AG04450 (cell line): ENCODE measurements at regions of chr15 and their contacts with region 1.

Region 1: GRCh38 chr15:70875001-70875782 is 17.0 kb downstream of the THAP10 start:
- DNase-seq: no peak
- H3K4me3 ChIP-seq: no peak overlapping the region
- H3K27ac ChIP-seq: no peak overlapping the region
- H3K27me3 ChIP-seq: no peaks in the 10 kb centered on the region
- CTCF ChIP-seq: peak; percentile 77

Region 2: GRCh38 chr15:70679919-70680231 is 195.3 kb before region 1 on chr15:
- CTCF ChIA-PET with region 1: interaction called, 15 read pairs
- POLR2A ChIA-PET with region 1: no interaction called
- DNase-seq: no peak
- H3K4me3 ChIP-seq: no peak overlapping the region
- H3K27ac ChIP-seq: no peak overlapping the region
- H3K27me3 ChIP-seq: no peaks in the 10 kb centered on the region
- CTCF ChIP-seq: no peak

Region 3: GRCh38 chr15:70826634-70827033 is 48.6 kb before region 1 on chr15:
- CTCF ChIA-PET with region 1: interaction called, 67 read pairs
- POLR2A ChIA-PET with region 1: no interaction called
- DNase-seq: no peak
- H3K4me3 ChIP-seq: no peak overlapping the region
- H3K27ac ChIP-seq: no peak overlapping the region
- H3K27me3 ChIP-seq: no peaks in the 10 kb centered on the region
- CTCF ChIP-seq: no peak

Region 4: DNA sequence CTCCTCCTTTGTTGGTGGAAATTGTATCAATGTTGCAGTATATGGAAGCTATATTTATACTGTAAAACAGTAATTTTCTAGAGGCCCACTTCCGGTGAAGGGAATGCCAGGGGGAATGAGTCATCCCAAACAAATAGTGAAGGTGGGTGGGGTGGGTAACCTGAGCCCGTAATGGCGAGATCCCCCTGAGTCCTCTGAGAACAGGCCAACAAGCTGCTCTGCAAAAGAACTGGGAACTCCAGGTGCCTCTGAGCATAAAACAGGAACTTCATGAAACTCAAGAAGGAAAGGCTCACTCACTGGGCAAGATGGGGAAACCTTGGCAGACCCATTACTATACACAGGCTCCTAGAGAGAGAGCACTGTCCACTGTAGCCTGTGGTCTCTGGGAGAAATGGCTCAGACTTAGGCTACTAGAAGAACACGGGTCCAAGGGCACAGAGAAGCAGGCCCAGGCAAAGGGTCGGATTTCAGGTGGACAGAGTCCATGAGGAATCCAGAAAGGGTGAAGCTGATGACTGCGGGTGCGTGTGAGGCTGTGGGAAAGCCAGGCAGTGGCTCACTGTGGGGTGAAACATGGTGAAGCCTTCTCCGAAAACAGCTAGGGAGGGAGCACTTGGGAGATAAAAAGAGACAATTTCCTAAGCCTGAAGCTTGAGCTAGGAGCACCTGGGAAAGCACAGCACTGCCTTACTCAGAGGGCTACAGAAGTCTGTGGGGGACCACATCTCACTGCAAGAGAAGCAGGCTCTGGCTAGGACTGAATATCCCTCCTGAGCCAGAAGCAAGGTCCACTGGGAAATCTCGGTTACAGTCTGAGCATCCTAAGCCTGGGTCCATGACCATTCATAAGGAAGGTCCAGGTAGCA is 41.1 kb before region 1 on chr15:
- CTCF ChIA-PET with region 1: interaction called, 21 read pairs
- POLR2A ChIA-PET with region 1: no interaction called
- DNase-seq: peak; percentile 67
- H3K4me3 ChIP-seq: no peak overlapping the region
- H3K27ac ChIP-seq: peak overlapping the region; percentile 89
- H3K27me3 ChIP-seq: no peaks in the 10 kb centered on the region
- CTCF ChIP-seq: no peak

Region 5: GRCh38 chr15:70853821-70854666 is 21.1 kb before region 1 on chr15 and contains the start of gene LARP6:
- CTCF ChIA-PET with region 1: interaction called, 11 read pairs
- POLR2A ChIA-PET with region 1: interaction called, 17 read pairs
- DNase-seq: no peak
- H3K4me3 ChIP-seq: peak within 1 kb of the TSS; percentile 98
- H3K27ac ChIP-seq: peak within 1 kb of the TSS; percentile 95
- H3K27me3 ChIP-seq: no peaks in the 10 kb centered on the region
- CTCF ChIP-seq: no peak
- polyA plus RNA-seq, gene LARP6: 188 and 235 TPM in 2 replicates

Region 6: DNA sequence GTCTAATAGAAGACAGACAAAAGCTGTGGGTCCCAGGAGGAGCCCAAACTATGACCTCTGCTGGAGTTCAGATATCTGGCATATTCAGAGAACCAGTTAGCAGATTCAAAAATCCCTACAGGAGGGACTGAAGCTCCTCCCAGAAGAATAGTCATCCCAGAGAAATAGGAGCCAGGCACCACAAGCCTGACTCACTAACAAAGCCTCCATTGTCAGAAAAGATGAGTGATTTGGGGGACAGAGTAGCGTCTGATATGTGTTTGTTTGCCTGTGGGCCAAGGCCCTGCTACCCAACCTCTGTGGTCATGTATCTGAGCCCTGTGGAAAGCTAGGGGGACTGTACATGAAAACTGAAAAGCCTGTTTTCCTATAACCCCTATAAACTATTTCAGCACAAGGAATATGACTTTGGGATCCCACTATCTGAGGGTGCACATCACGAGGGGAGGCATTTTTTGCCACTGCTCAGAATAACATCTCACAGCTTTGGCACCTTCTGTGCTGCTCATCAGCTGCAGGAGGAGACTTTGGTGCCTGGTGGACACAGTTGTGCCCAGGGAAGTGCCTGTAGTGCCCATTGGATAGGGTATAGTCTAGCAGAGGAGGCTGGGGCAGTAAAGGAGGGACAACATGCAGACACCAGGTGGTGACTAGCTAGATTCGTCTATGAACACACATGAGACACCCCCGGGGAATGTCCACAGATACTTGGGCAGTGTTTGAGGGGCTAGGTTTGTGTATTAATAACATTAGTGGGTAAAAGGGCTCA is 11.6 kb before region 1 on chr15:
- CTCF ChIA-PET with region 1: interaction called, 10 read pairs
- POLR2A ChIA-PET with region 1: no interaction called
- DNase-seq: no peak
- H3K4me3 ChIP-seq: no peak overlapping the region
- H3K27ac ChIP-seq: peak overlapping the region; percentile 40
- H3K27me3 ChIP-seq: no peaks in the 10 kb centered on the region
- CTCF ChIP-seq: no peak

Region 7: GRCh38 chr15:70892002-70892914 is 17.1 kb after region 1 on chr15 and contains the starts of genes LRRC49 and THAP10:
- CTCF ChIA-PET with region 1: interaction called, 10 read pairs
- POLR2A ChIA-PET with region 1: no interaction called
- DNase-seq: peak; percentile 89
- H3K4me3 ChIP-seq: peak within 1 kb of the TSS; percentile 82
- H3K27ac ChIP-seq: peak within 1 kb of the TSS; percentile 89
- H3K27me3 ChIP-seq: no peaks in the 10 kb centered on the region
- CTCF ChIP-seq: no peak
- polyA plus RNA-seq, gene LRRC49: 22.9 and 25.0 TPM in 2 replicates
- polyA plus RNA-seq, gene THAP10: 2.7 and 5.7 TPM in 2 replicates

Region 8: GRCh38 chr15:70964058-70964457 is 88.9 kb after region 1 on chr15:
- CTCF ChIA-PET with region 1: no interaction called
- POLR2A ChIA-PET with region 1: no interaction called
- DNase-seq: no peak
- H3K4me3 ChIP-seq: no peak overlapping the region
- H3K27ac ChIP-seq: no peak overlapping the region
- H3K27me3 ChIP-seq: no peaks in the 10 kb centered on the region
- CTCF ChIP-seq: no peak

Region 9: DNA sequence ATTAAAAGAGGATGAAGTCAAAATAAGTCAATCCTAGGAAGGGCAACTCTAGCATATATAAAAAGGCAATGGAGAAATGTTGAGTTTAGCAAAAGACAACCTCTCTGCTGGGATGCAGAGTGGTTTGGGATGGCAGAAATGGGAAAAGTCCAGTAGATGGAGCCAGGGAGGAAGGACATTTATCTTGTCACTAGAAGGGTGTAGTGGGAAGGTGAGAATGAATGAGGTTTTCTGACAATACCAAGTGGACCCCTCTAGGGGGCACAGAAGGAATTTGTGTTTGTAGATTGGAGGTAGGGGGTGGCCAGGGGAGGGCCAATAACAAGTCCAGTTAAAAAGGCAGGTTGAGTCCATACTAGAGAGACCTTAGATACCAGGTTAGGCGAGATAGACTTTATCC is 320.0 kb after region 1 on chr15:
- CTCF ChIA-PET with region 1: no interaction called
- POLR2A ChIA-PET with region 1: no interaction called
- DNase-seq: no peak
- H3K4me3 ChIP-seq: no peak overlapping the region
- H3K27ac ChIP-seq: no peak overlapping the region
- H3K27me3 ChIP-seq: no peaks in the 10 kb centered on the region
- CTCF ChIP-seq: no peak

Region 10: GRCh38 chr15:71476823-71477222 is 601.6 kb after region 1 on chr15:
- CTCF ChIA-PET with region 1: no interaction called
- POLR2A ChIA-PET with region 1: no interaction called
- DNase-seq: no peak
- H3K4me3 ChIP-seq: no peak overlapping the region
- H3K27ac ChIP-seq: no peak overlapping the region
- H3K27me3 ChIP-seq: no peaks in the 10 kb centered on the region
- CTCF ChIP-seq: no peak